ENCODE measurements at regions of chr13 and their contacts with region 1.

Region 1: DNA sequence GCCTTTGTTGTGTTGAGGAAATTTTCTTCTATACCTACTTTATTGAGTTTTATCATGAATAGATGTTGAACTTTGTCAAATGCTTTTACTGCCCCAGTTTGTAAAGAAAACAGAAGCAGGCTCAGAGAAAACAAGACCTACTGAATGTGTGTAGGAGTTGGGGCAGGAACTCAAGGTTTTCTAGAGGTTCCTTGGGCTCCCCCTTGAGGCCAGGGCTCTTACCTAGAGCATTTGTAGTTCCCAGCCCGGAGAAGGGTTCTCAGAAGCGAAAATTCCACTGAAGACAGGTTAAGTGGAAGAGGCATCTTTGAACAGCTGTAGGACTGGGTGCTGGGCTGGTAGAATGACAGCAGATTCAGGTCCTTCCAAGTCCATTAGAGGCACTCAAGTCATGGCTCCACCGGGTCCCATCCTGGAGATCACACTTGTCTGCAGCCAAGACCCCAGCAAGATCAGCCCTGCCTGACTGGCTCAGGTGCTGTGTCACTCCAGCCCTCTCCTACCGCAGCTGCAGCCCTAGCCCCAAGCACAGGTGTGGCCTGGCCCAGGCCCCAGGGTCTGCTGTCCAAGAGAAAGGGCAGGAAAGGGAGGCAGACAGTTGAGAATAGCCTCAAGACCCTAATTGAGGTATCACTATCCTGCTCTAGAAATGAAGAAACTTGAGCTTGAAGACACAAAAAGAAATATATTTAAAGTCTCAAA is 425.5 kb downstream of the PCDH20 start:
- DNase-seq: no peak
- H3K4me3 ChIP-seq: no peak overlapping the region
- H3K27ac ChIP-seq: no peak overlapping the region
- H3K4me1 ChIP-seq: no peaks in the 10 kb centered on the region
- H3K27me3 ChIP-seq: no peaks in the 10 kb centered on the region
- CTCF ChIP-seq: peak in 1 of 2 donors; percentile 30
- POLR2A ChIP-seq: no peak

Region 2: GRCh38 chr13:60627071-60627686 is 363.0 kb before region 1 on chr13:
- CTCF ChIA-PET with region 1: no interaction called
- POLR2A ChIA-PET with region 1: no interaction called
- dilution Hi-C with region 1: no loop called
- intact Hi-C with region 1: loop called (anchors 10 kb)
- DNase-seq: peak; percentile 42
- H3K4me3 ChIP-seq: no peak overlapping the region
- H3K27ac ChIP-seq: no peak overlapping the region
- H3K4me1 ChIP-seq: no peaks in the 10 kb centered on the region
- H3K27me3 ChIP-seq: peaks cover 2 to 22% of the 10 kb centered on the region in 2 experiments
- CTCF ChIP-seq: peak; percentile 63 to 72
- POLR2A ChIP-seq: no peak

Region 3: GRCh38 chr13:60654415-60654814 is 335.8 kb before region 1 on chr13:
- CTCF ChIA-PET with region 1: no interaction called
- POLR2A ChIA-PET with region 1: no interaction called
- dilution Hi-C with region 1: no loop called
- intact Hi-C with region 1: loop called (anchors 1 kb)
- DNase-seq: peak; percentile 56
- H3K4me3 ChIP-seq: no peak overlapping the region
- H3K27ac ChIP-seq: no peak overlapping the region
- H3K4me1 ChIP-seq: no peaks in the 10 kb centered on the region
- H3K27me3 ChIP-seq: peaks cover 0 to 3% of the 10 kb centered on the region in 2 experiments
- CTCF ChIP-seq: peak; percentile 67 to 71
- POLR2A ChIP-seq: no peak

Region 4: GRCh38 chr13:61202042-61202441 is 211.9 kb after region 1 on chr13:
- CTCF ChIA-PET with region 1: no interaction called
- POLR2A ChIA-PET with region 1: no interaction called
- dilution Hi-C with region 1: no loop called
- intact Hi-C with region 1: no loop called
- DNase-seq: no peak
- H3K4me3 ChIP-seq: no peak overlapping the region
- H3K27ac ChIP-seq: no peak overlapping the region
- H3K4me1 ChIP-seq: no peaks in the 10 kb centered on the region
- H3K27me3 ChIP-seq: no peaks in the 10 kb centered on the region
- CTCF ChIP-seq: no peak
- POLR2A ChIP-seq: no peak